ENCODE measurements at regions of chr1 and their contacts with region 1.

Region 1: DNA sequence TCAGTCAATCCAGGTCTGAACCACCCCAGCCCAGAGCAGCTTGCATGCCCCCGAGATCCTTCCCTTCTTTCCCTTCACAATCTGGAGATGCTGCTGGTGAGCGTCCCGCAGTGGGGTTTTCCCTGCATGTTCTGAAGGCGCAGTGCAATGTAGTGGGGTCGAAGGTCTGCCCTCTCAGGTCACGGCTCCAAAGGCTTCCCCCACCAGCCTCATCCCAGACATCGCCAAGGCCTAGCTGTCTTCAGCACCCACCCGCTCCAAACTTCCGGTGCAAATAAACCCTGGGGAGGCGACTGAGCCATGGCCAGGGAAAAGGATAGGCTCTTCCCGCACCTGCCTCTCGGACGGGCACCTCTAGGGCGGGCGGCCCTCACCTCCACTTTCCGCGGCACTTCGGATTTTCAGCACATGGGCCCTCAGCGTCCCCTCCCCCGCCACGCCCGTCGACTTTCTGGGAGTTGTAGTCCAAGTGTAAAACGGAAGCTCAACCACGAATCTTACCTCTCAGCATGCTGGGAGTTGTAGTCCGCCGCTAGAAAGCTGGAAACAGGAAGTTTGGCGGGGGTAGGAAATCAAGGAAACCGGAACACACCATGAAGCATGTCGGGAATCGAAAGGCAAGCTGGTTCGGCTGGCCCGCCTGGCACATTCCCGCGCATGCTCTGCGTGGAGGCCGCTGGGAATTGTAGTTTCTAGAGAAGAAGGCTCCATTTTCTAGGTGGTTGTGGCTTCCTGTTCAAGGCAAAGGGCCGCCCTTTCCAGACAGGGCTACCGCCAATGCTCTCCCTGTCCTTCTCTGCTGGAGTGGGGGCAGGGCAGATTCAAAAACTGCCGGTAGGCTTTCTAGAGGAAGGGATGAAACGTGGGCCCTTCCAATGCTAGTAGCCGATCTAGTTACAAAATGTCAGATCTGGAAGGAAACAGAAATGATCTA is at the start of gene MRPL24:
- DNase-seq: peak; percentile 97 to 100
- ATAC-seq: peak; percentile 92 to 93
- H3K4me3 ChIP-seq: peak within 1 kb of the TSS; percentile 66
- H3K27ac ChIP-seq: peak within 1 kb of the TSS; percentile 88 to 94
- H3K4me1 ChIP-seq: peaks cover 30% of the 10 kb centered on the region
- CTCF ChIP-seq: no peak
- EP300 ChIP-seq: no peak
- POLR2A ChIP-seq: peak; percentile 57
- RAD21 ChIP-seq: no peak
- polyA plus RNA-seq, gene MRPL24: 170 and 246 TPM in 2 replicates

Region 2: GRCh38 chr1:156601122-156601830 is 139.7 kb before region 1 on chr1 and contains the start of gene GPATCH4:
- CTCF ChIA-PET with region 1: no interaction called
- POLR2A ChIA-PET with region 1: no interaction called
- DNase-seq: peak; percentile 89 to 92
- ATAC-seq: peak; percentile 86 to 87
- H3K4me3 ChIP-seq: peak within 1 kb of the TSS; percentile 77
- H3K27ac ChIP-seq: peak within 1 kb of the TSS; percentile 86 to 94
- H3K4me1 ChIP-seq: peaks cover 19% of the 10 kb centered on the region
- CTCF ChIP-seq: no peak
- EP300 ChIP-seq: no peak
- POLR2A ChIP-seq: peak; percentile 87
- RAD21 ChIP-seq: no peak
- polyA plus RNA-seq, gene GPATCH4: 68.1 and 76.1 TPM in 2 replicates

Region 3: GRCh38 chr1:156751758-156752757 is 11.1 kb after region 1 on chr1:
- CTCF ChIA-PET with region 1: interaction called, 4 read pairs
- POLR2A ChIA-PET with region 1: interaction called, 50 read pairs
- DNase-seq: peak; percentile 83 to 96
- ATAC-seq: peak; percentile 59 to 67
- H3K4me3 ChIP-seq: peak overlapping the region; percentile 92
- H3K27ac ChIP-seq: peak overlapping the region; percentile 99 to 100
- H3K4me1 ChIP-seq: peaks cover 31% of the 10 kb centered on the region
- CTCF ChIP-seq: no peak
- EP300 ChIP-seq: no peak
- POLR2A ChIP-seq: peak; percentile 51; the same call in 1 of the 2 replicates
- RAD21 ChIP-seq: 0 out of 5 replicates have a peak, but pooled peaks have one; percentile 7 to 27

Measured in A549 (cell line).